ENCODE measurements at regions of chr16 and their contacts with region 1.

Region 1: GRCh38 chr16:51048544-51048943 is 102.5 kb downstream of the SALL1 start:
- DNase-seq: no peak

Region 2: GRCh38 chr16:50879873-50880695 is 168.5 kb before region 1 on chr16:
- intact Hi-C with region 1: loop called (anchors 10 kb)
- DNase-seq: peak in 3 of 10 donors; percentile 20 to 86 (median 43)

Region 3: DNA sequence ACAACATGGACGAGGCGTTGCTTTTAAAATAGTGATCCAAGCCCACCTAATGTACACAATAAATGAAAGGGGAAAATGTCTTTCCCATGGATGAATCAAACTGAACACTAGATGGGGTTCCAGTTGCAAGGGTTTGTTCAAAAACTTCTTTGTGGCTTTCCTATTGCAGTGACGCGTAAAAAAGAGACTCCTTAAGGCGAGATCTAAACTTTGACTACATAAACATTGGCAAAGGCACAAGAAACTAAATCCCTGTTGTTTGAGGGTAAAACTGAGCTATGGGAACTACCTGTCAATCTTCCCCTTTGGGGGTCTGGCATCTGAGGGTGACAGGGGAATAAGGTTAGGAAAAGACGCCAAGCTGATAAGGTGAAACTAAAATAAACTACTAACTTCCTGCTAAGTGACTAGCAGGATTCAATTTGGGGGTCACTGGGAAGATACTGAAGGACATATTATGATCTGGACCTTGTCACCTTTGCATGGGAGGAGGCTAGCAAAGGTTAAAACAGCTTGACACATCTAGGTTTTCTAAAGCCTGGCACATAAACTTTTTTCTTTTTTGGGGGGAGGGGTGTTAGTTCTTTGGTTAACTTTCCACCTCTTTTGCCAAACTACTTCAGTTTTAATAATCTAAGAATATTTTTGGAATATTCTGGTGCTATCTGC is 97.8 kb after region 1 on chr16:
- intact Hi-C with region 1: loop called (anchors 10 kb)
- DNase-seq: no peak

Measured in posterior cingulate gyrus (tissue), 11 donors.